ENCODE measurements at regions of chr15 and their contacts with region 1.

Region 1: GRCh38 chr15:29070449-29071231 is 184.9 kb downstream of the APBA2 start:
- ATAC-seq: peak in 5 of 8 experiments; percentile 54 to 72 (median 63)
- H3K4me3 ChIP-seq: no peak overlapping the region
- H3K27ac ChIP-seq: peak overlapping the region; percentile 73 to 79
- H3K4me1 ChIP-seq: peaks cover 47 to 56% of the 10 kb centered on the region in 2 donors

Region 2: GRCh38 chr15:29018120-29018805 is 52.4 kb before region 1 on chr15:
- in situ Hi-C with region 1: loop called in 1 of 9 experiments (anchors 10 kb)
- ATAC-seq: peak in 5 of 8 experiments; percentile 8 to 46 (median 37)
- H3K4me3 ChIP-seq: no peak overlapping the region
- H3K27ac ChIP-seq: peak overlapping the region; percentile 5 to 15
- H3K4me1 ChIP-seq: peaks cover 44 to 52% of the 10 kb centered on the region in 2 donors

Measured in motor neuron (in vitro differentiated cells).